ENCODE measurements at regions of chr1 and their contacts with region 1.

Region 1: GRCh38 chr1:52937433-52938182 is 10.5 kb downstream of the SCP2 start:
- DNase-seq: no peak
- H3K4me3 ChIP-seq: no peak overlapping the region
- H3K27ac ChIP-seq: no peak overlapping the region
- H3K27me3 ChIP-seq: no peaks in the 10 kb centered on the region
- CTCF ChIP-seq: no peak

Region 2: GRCh38 chr1:52792036-52792435 is 145.6 kb before region 1 on chr1:
- CTCF ChIA-PET with region 1: no interaction called
- POLR2A ChIA-PET with region 1: no interaction called
- DNase-seq: no peak
- H3K4me3 ChIP-seq: no peak overlapping the region
- H3K27ac ChIP-seq: no peak overlapping the region
- H3K27me3 ChIP-seq: no peaks in the 10 kb centered on the region
- CTCF ChIP-seq: no peak

Region 3: DNA sequence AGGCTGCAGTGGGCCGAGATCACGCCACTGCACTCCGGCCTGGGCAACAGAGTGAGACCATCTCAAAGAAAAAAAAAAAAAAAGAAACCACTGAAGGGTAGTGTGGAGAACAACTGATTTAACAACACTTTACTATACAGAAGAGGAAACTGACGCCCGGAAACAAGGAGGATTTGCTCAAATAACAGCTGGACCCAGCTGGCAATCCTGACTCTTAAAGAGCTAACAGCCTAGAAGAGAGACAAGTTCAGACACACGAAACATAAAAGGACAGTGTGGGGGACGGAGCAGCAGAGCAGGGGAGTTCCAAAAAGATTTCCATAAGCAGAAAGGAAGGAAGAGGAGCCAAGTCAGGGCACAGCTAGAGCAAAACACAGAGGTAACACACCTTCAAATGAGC is 20.5 kb before region 1 on chr1:
- CTCF ChIA-PET with region 1: interaction called, 3 read pairs
- POLR2A ChIA-PET with region 1: interaction called, 10 read pairs
- DNase-seq: peak; percentile 11
- H3K4me3 ChIP-seq: no peak overlapping the region
- H3K27ac ChIP-seq: no peak overlapping the region
- H3K27me3 ChIP-seq: no peaks in the 10 kb centered on the region
- CTCF ChIP-seq: no peak

Region 4: GRCh38 chr1:52955129-52955970 is 17.7 kb after region 1 on chr1:
- CTCF ChIA-PET with region 1: no interaction called
- POLR2A ChIA-PET with region 1: interaction called, 10 read pairs
- DNase-seq: peak; percentile 27
- H3K4me3 ChIP-seq: no peak overlapping the region
- H3K27ac ChIP-seq: no peak overlapping the region
- H3K27me3 ChIP-seq: no peaks in the 10 kb centered on the region
- CTCF ChIP-seq: no peak

Region 5: DNA sequence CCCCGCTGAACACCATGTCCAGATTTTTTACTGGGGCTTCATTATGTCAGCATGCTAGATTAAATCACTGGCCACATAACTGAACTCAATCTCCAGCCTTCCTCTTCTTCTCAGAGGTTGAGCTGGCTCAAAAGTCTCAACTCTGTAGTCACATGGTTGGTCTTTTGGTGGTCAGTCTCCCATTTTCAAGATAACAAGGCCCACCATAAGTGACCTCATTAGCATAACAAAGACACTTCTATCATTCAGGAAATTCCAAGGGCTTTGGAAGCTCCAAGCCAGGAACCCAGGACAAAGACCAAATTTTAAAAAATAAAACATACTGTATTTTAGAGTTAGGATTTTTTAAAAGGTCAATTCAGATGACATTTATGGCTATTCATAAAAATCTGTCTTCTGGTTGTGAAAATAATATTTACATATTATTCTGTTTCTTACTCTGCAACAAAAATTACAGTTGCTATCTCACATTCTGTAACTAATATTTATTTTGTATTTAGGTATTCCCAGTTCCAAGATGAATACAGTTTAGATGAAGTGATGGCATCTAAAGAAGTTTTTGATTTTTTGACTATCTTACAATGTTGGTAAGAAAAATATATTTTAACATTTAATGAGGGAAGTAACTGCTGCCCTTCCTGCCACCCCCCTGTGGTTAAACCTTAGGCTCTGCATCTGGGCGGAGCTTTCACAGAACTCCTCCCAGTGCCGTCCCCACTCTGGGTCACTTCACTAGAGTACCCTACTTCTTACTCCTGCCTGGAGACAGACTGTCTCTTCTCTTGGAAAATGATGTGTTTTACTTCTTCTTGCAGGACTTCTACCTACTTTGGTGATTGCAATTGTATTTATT is 38.8 kb after region 1 on chr1:
- CTCF ChIA-PET with region 1: no interaction called
- POLR2A ChIA-PET with region 1: no interaction called
- DNase-seq: no peak
- H3K4me3 ChIP-seq: no peak overlapping the region
- H3K27ac ChIP-seq: no peak overlapping the region
- H3K27me3 ChIP-seq: no peaks in the 10 kb centered on the region
- CTCF ChIP-seq: no peak